GM10248 (cell line): ENCODE measurements at regions of chr2 and their contacts with region 1.

Region 1: GRCh38 chr2:159879051-159879604 is 81.1 kb upstream of the CD302 start:
- DNase-seq: peak; percentile 52
- CTCF ChIP-seq: no peak

Region 2: GRCh38 chr2:159064446-159065301 is 814.5 kb before region 1 on chr2:
- CTCF ChIA-PET with region 1: no interaction called
- POLR2A ChIA-PET with region 1: no interaction called
- DNase-seq: no peak
- CTCF ChIP-seq: no peak

Region 3: GRCh38 chr2:159895258-159896065 is 16.3 kb after region 1 on chr2:
- CTCF ChIA-PET with region 1: interaction called, 24 read pairs
- POLR2A ChIA-PET with region 1: interaction called, 10 read pairs
- DNase-seq: peak; percentile 38
- CTCF ChIP-seq: no peak

Region 4: GRCh38 chr2:159904127-159904958 is 25.2 kb after region 1 on chr2:
- CTCF ChIA-PET with region 1: interaction called, 24 read pairs
- POLR2A ChIA-PET with region 1: interaction called, 6 read pairs
- DNase-seq: peak; percentile 92
- CTCF ChIP-seq: no peak